Activated T-helper 2 cell treated with anti-CD3 and anti-CD28 coated beads, Interferon-gamma antibody, Interleukin-2, Interleukin-4, amounts not matched to agents 10 μg/mL and 5 μg/mL and 100 μg/mL, durations not matched to agents 14 hours and 24 hours and 36 hours (primary cell): ENCODE measurements at regions of chr10 and their contacts with region 1.

Region 1: DNA sequence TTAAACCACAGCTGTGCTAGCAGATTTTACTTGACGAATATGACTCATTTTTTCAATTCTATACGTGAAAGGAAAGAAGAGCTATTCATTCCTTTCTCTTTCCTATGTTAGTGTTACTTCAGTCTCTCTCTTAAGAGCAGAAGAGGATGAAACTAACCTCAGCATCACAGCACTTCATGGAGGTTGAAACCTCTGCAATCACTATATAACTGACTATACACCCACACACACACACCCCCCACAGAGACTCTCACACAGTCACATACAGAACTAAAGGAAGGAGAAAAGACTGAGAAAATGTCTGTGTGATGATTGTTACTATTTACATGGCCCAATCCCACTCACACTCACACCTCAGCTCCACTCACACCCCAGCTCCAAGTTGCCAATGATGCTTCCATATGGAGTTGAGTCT is 104.2 kb downstream of the KIF20B start:
- DNase-seq: no peak
- H3K4me3 Mint-ChIP-seq: no peak overlapping the region
- H3K27ac Mint-ChIP-seq: peak overlapping the region; percentile 14
- H3K4me1 Mint-ChIP-seq: peaks cover 19% of the 10 kb centered on the region
- H3K27me3 Mint-ChIP-seq: peaks cover 40% of the 10 kb centered on the region

Region 2: DNA sequence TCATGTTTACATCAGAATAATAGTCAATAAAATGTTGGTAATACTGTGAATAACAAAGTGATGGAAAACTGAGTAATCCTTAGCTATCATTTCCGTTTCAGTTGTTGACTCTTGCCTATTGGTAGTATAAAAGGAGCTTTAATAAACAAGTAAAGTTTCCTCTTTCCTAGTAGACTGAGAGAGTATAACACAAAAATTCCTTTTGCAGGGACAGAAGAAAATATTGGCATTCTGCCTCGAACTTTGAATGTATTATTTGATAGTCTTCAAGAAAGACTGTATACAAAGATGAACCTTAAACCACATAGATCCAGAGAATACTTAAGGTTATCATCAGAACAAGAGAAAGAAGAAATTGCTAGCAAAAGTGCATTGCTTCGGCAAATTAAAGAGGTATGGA is 94.9 kb before region 1 on chr10:
- intact Hi-C with region 1: no loop called
- DNase-seq: no peak
- H3K4me3 Mint-ChIP-seq: no peak overlapping the region
- H3K27ac Mint-ChIP-seq: peak overlapping the region; percentile 46
- H3K4me1 Mint-ChIP-seq: peaks cover 22% of the 10 kb centered on the region
- H3K27me3 Mint-ChIP-seq: no peaks in the 10 kb centered on the region

Region 3: DNA sequence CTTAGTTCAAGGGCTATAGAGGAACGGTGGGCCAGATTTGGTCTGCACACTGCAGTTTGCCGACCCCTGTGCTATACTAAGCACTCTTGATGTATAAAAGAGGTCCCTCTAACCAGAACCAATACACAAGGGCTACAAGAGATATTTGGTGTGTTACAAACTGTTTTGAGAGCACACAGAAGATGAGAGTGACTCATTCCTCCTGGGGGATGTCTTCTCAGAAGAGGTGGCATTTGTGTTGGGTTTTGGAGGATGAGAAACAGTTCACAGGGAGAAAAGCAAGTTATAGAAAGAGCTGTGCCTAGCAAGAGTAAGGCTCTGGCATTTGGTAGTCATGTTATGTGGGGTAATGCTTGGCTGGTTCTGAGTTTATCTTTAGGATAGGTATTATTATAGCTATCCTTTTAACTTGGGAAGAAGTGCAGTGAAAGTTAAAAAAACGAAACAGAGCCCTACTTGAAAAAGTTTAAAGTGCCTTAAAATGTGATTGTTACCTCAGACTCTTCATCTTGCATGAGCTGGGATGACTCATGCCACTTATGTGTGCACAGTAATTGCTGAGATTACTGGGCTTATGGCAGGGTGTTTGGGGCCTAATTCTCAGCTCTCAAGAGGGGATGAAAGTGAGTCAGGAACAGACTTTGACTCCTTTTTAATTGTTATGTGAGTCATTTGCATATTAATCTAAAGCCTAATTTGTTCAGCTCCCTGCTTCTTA is 56.1 kb after region 1 on chr10:
- intact Hi-C with region 1: loop called (anchors 2 kb)
- DNase-seq: no peak
- H3K4me3 Mint-ChIP-seq: no peak overlapping the region
- H3K27ac Mint-ChIP-seq: peak overlapping the region; percentile 47
- H3K4me1 Mint-ChIP-seq: peaks cover 16% of the 10 kb centered on the region
- H3K27me3 Mint-ChIP-seq: peaks cover 12% of the 10 kb centered on the region

Region 4: DNA sequence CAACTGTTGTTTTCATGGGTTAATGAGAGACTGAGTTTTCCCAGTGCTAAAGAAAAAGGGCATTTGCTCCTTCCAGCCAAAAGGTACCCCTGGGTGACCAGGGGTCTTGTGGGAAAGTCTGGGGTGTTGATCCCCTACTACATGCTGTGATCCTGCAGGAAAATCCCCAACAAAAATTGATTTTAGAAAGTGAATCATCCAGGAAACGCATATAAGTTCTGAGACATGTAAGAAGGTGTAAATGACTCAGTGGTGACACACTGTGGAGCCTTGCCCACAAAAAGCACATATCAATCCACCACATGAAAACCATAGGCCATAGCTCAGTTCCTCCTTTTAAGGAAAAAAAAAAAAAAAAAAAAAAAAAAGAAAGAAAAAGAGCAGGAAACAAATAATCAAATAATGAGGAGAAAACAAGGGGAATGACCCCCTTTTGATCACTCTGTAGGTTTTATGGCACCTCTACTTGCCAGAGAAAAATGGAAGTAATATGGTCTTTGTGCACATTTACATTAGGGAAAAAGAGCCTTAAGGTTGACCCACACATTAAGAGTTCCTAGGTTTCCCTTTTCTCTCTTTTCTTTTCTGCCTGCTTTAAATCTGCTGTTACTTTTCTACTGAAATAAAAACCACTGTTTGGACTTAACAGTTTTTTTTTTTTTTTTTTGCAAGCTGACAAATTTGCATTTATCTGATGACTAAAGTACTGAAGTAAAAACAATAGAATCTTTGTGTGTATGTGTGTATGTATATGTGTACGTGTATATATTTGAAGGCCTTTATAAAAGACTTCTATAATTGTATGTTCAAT is 281.8 kb after region 1 on chr10:
- intact Hi-C with region 1: loop called (anchors 5 kb)
- DNase-seq: no peak
- H3K4me3 Mint-ChIP-seq: no peak overlapping the region
- H3K27ac Mint-ChIP-seq: no peak overlapping the region
- H3K4me1 Mint-ChIP-seq: peaks cover 9% of the 10 kb centered on the region
- H3K27me3 Mint-ChIP-seq: peaks cover under 1% of the 10 kb centered on the region